GM12878 (cell line): ENCODE measurements at regions of chr3 and their contacts with region 1.

Region 1: DNA sequence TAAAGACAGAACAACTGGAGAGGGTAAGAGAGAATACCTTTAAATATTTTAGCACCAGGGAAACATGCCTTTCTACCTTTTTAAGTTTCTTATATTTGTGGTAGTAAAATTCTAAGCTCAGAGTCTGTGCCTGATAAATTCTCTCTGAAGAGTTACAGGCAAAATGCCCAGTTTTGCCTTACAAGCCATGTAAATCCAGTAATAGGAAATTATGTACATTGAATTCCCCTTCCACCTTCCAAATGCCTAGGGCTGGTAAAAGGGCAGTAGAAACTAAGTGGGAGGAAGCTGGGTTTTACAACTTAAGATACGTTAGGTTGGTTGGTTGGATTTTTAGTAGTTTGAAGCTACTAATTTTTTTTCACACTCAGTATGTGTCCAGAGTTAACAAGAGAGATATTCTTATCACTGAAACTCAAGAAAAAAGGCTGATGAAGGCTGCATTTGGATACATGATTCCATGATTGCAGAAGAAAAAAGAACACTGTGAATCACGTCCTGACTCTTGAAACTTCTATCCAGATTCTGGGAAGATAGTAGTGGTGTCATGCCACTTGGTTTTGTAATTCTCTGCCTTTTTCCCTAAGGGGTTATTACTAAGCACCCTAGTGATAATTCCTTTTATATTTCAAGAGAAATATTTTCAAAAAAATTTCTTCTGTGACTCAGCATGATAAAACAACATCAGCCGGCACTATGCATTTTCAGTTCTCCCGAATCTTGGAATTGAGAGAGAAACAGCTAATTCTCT is 42.9 kb upstream of the TP63 start:
- DNase-seq: no peak
- ATAC-seq: no peak
- H3K4me3 ChIP-seq: no peak overlapping the region
- H3K27ac ChIP-seq: 0 out of 2 replicates have a peak overlapping the region, but pooled peaks have one; percentile 26
- H3K4me1 ChIP-seq: peaks cover 18% of the 10 kb centered on the region
- H3K27me3 ChIP-seq: no peaks in the 10 kb centered on the region
- CTCF ChIP-seq: no peak
- EP300 ChIP-seq: no peak
- POLR2A ChIP-seq: no peak
- RAD21 ChIP-seq: no peak

Region 2: GRCh38 chr3:189563866-189564563 is 24.2 kb before region 1 on chr3:
- CTCF ChIA-PET with region 1: interaction called, 4 read pairs
- POLR2A ChIA-PET with region 1: interaction called, 3 read pairs
- RAD21 ChIA-PET with region 1: interaction called, 7 read pairs
- SMC1A ChIA-PET with region 1: interaction called, 11 read pairs
- in situ Hi-C with region 1: no loop called
- intact Hi-C with region 1: no loop called
- DNase-seq: peak; percentile 82
- ATAC-seq: peak; percentile 84
- H3K4me3 ChIP-seq: no peak overlapping the region
- H3K27ac ChIP-seq: peak overlapping the region; percentile 60
- H3K4me1 ChIP-seq: peaks cover 48% of the 10 kb centered on the region
- H3K27me3 ChIP-seq: no peaks in the 10 kb centered on the region
- CTCF ChIP-seq: 0 out of 6 replicates have a peak, but pooled peaks of 2 of the 3 experiments have one; percentile 3 to 5
- EP300 ChIP-seq: peak; percentile 43 to 51; a peak in 2 of 4 replicates
- POLR2A ChIP-seq: no peak
- RAD21 ChIP-seq: peak; percentile 34; the same call in 1 of the 2 replicates

Region 3: GRCh38 chr3:189630767-189631372 is 42.6 kb after region 1 on chr3:
- CTCF ChIA-PET with region 1: interaction called, 3 read pairs
- POLR2A ChIA-PET with region 1: interaction called, 3 read pairs
- RAD21 ChIA-PET with region 1: interaction called, 10 read pairs
- SMC1A ChIA-PET with region 1: interaction called, 28 read pairs
- in situ Hi-C with region 1: no loop called
- intact Hi-C with region 1: loop called (anchors 5 kb)
- DNase-seq: peak; percentile 73
- ATAC-seq: peak; percentile 81
- H3K4me3 ChIP-seq: peak overlapping the region; percentile 65
- H3K27ac ChIP-seq: peak overlapping the region; percentile 86
- H3K4me1 ChIP-seq: peaks cover 13% of the 10 kb centered on the region; the same call in 1 of the 2 replicates
- H3K27me3 ChIP-seq: no peaks in the 10 kb centered on the region
- CTCF ChIP-seq: no peak
- EP300 ChIP-seq: peak in 1 of 2 experiments; percentile 41; a peak in 1 of 4 replicates
- POLR2A ChIP-seq: no peak
- RAD21 ChIP-seq: 0 out of 2 replicates have a peak, but pooled peaks have one; percentile 6